T-cell (primary cell): ENCODE measurements at regions of chr13 and their contacts with region 1.

Region 1: GRCh38 chr13:29354377-29354776 is 241.1 kb downstream of the SLC7A1 start:
- DNase-seq: no peak
- ATAC-seq: no peak
- H3K4me3 ChIP-seq: no peak overlapping the region
- H3K4me3 Mint-ChIP-seq: no peak overlapping the region
- H3K27ac ChIP-seq: no peak overlapping the region
- H3K27ac Mint-ChIP-seq: no peak overlapping the region
- H3K4me1 ChIP-seq: no peaks in the 10 kb centered on the region
- H3K4me1 Mint-ChIP-seq: no peaks in the 10 kb centered on the region
- H3K27me3 ChIP-seq: peaks cover 0 to 2% of the 10 kb centered on the region in 2 experiments
- H3K27me3 Mint-ChIP-seq: peaks cover 17 to 22% of the 10 kb centered on the region in 2 donors

Region 2: GRCh38 chr13:29266261-29266660 is 88.1 kb before region 1 on chr13:
- CTCF ChIA-PET with region 1: no interaction called
- POLR2A ChIA-PET with region 1: interaction called in 1 of 2 experiments, 11 read pairs
- DNase-seq: peak in 1 of 35 experiments; percentile 1
- ATAC-seq: no peak
- H3K4me3 ChIP-seq: no peak overlapping the region
- H3K4me3 Mint-ChIP-seq: no peak overlapping the region
- H3K27ac ChIP-seq: no peak overlapping the region
- H3K27ac Mint-ChIP-seq: no peak overlapping the region
- H3K4me1 ChIP-seq: no peaks in the 10 kb centered on the region
- H3K4me1 Mint-ChIP-seq: no peaks in the 10 kb centered on the region
- H3K27me3 ChIP-seq: no peaks in the 10 kb centered on the region
- H3K27me3 Mint-ChIP-seq: peaks cover 0 to 4% of the 10 kb centered on the region in 2 donors

Region 3: GRCh38 chr13:29402166-29402636 is 47.8 kb after region 1 on chr13:
- CTCF ChIA-PET with region 1: no interaction called
- POLR2A ChIA-PET with region 1: no interaction called
- DNase-seq: no peak
- ATAC-seq: no peak
- H3K4me3 ChIP-seq: no peak overlapping the region
- H3K4me3 Mint-ChIP-seq: no peak overlapping the region
- H3K27ac ChIP-seq: no peak overlapping the region
- H3K27ac Mint-ChIP-seq: no peak overlapping the region
- H3K4me1 ChIP-seq: no peaks in the 10 kb centered on the region
- H3K4me1 Mint-ChIP-seq: no peaks in the 10 kb centered on the region
- H3K27me3 ChIP-seq: peaks cover 0 to 9% of the 10 kb centered on the region in 2 experiments
- H3K27me3 Mint-ChIP-seq: peaks cover 5 to 14% of the 10 kb centered on the region in 2 donors

Region 4: DNA sequence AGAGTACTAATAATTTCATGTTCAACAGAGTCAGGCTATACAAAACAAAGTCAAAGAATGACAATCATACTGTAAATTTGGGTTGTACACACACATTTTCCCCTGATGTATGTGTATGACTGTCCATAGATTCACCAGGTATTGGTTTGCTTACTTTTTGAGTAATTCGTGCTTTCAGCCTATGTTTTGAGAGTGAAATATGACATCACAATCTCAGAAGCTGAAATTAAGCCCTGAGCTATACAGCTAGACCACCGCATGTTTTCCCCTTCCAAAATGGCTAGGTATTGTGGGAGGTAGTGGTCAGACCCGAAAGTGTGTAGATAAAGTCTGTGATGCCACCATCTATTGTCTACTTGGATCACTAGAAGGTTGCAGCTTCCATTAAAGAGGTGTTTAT is 850.2 kb after region 1 on chr13:
- CTCF ChIA-PET with region 1: no interaction called
- POLR2A ChIA-PET with region 1: no interaction called
- DNase-seq: no peak
- ATAC-seq: no peak
- H3K4me3 ChIP-seq: no peak overlapping the region
- H3K4me3 Mint-ChIP-seq: no peak overlapping the region
- H3K27ac ChIP-seq: no peak overlapping the region
- H3K27ac Mint-ChIP-seq: no peak overlapping the region
- H3K4me1 ChIP-seq: peaks cover 0 to 13% of the 10 kb centered on the region in 2 experiments
- H3K4me1 Mint-ChIP-seq: peaks cover 5 to 6% (median 5%) of the 10 kb centered on the region in 3 donors
- H3K27me3 ChIP-seq: no peaks in the 10 kb centered on the region
- H3K27me3 Mint-ChIP-seq: no peaks in the 10 kb centered on the region